ENCODE measurements at regions of chr5 and their contacts with region 1.

Region 1: GRCh38 chr5:90446961-90447360 is 27.6 kb downstream of the MBLAC2 start:
- DNase-seq: no peak
- H3K4me3 ChIP-seq: no peak overlapping the region
- H3K27ac ChIP-seq: no peak overlapping the region
- H3K4me1 ChIP-seq: no peaks in the 10 kb centered on the region
- H3K27me3 ChIP-seq: no peaks in the 10 kb centered on the region
- CTCF ChIP-seq: no peak
- POLR2A ChIP-seq: no peak

Region 2: GRCh38 chr5:90226433-90227099 is 220.4 kb before region 1 on chr5:
- CTCF ChIA-PET with region 1: no interaction called
- POLR2A ChIA-PET with region 1: no interaction called
- dilution Hi-C with region 1: no loop called
- intact Hi-C with region 1: no loop called
- DNase-seq: peak; percentile 54
- H3K4me3 ChIP-seq: no peak overlapping the region
- H3K27ac ChIP-seq: no peak overlapping the region
- H3K4me1 ChIP-seq: peaks cover 12% of the 10 kb centered on the region
- H3K27me3 ChIP-seq: no peaks in the 10 kb centered on the region
- CTCF ChIP-seq: no peak
- POLR2A ChIP-seq: no peak

Region 3: GRCh38 chr5:90461292-90461691 is 14.3 kb after region 1 on chr5:
- CTCF ChIA-PET with region 1: interaction called, 11 read pairs
- POLR2A ChIA-PET with region 1: no interaction called
- dilution Hi-C with region 1: no loop called
- intact Hi-C with region 1: no loop called
- DNase-seq: no peak
- H3K4me3 ChIP-seq: no peak overlapping the region
- H3K27ac ChIP-seq: no peak overlapping the region
- H3K4me1 ChIP-seq: no peaks in the 10 kb centered on the region
- H3K27me3 ChIP-seq: no peaks in the 10 kb centered on the region
- CTCF ChIP-seq: no peak
- POLR2A ChIP-seq: no peak